Right cardiac atrium (tissue), 5 donors: ENCODE measurements at regions of chr2 and their contacts with region 1.

Region 1: GRCh38 chr2:230153390-230153976 is 66.3 kb downstream of the SP110 start:
- DNase-seq: no peak
- ATAC-seq: no peak
- H3K4me3 ChIP-seq: no peak overlapping the region
- H3K27ac ChIP-seq: no peak overlapping the region
- H3K4me1 ChIP-seq: no peaks in the 10 kb centered on the region
- H3K27me3 ChIP-seq: no peaks in the 10 kb centered on the region

Region 2: DNA sequence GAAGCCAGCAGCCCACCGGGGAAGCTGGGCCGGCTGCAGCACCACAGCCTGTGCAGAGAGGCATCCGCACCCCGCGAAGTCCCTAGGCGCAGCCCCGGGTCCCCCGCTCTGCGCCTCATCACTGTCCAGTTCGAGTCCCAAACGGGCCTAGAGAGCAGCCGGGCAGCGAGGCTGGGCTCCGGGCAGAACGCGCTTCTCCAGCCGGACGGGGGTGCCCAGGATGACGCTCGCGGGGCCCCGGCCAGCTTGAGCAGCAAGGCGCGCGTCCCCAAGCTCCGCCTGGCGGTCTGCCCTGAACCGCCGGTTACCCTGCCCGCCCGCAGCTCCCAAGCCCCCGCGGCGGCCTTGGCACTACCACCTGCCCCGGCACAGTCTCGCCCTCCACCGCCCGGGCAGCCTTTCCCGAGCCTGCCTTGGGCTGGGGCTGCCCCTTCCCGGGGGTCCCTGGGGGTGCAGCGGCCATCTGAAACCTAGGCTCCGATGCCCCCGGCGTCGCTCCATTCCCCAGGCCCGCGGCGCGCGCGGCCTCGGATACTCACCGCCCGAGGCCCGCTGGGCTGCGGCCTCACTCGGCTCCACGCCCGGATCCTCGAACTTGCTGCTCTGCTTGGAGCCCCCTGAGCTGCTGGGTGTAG is 85.3 kb before region 1 on chr2:
- intact Hi-C with region 1: loop called in 1 of 4 experiments (anchors 10 kb)
- DNase-seq: peak; percentile 61 to 86 (median 85)
- ATAC-seq: peak; percentile 79 to 85
- H3K4me3 ChIP-seq: peak overlapping the region; percentile 52
- H3K27ac ChIP-seq: no peak overlapping the region
- H3K4me1 ChIP-seq: no peaks in the 10 kb centered on the region
- H3K27me3 ChIP-seq: no peaks in the 10 kb centered on the region

Region 3: GRCh38 chr2:230209422-230210051 is 56.1 kb after region 1 on chr2:
- intact Hi-C with region 1: no loop called
- DNase-seq: no peak
- ATAC-seq: no peak
- H3K4me3 ChIP-seq: no peak overlapping the region
- H3K27ac ChIP-seq: no peak overlapping the region
- H3K4me1 ChIP-seq: no peaks in the 10 kb centered on the region
- H3K27me3 ChIP-seq: no peaks in the 10 kb centered on the region

Region 4: GRCh38 chr2:230614913-230615332 is 461.4 kb after region 1 on chr2:
- intact Hi-C with region 1: loop called in 1 of 4 experiments (anchors 10 kb)
- DNase-seq: no peak
- ATAC-seq: no peak
- H3K4me3 ChIP-seq: no peak overlapping the region
- H3K27ac ChIP-seq: no peak overlapping the region
- H3K4me1 ChIP-seq: no peaks in the 10 kb centered on the region
- H3K27me3 ChIP-seq: no peaks in the 10 kb centered on the region